ENCODE measurements at regions of chr12 and their contacts with region 1.

Region 1: GRCh38 chr12:1117970-1118563 is 127.0 kb downstream of the ERC1 start:
- ATAC-seq: peak in 7 of 8 experiments; percentile 29 to 65 (median 44)
- H3K4me3 ChIP-seq: no peak overlapping the region
- H3K27ac ChIP-seq: no peak overlapping the region
- H3K4me1 ChIP-seq: no peaks in the 10 kb centered on the region

Region 2: DNA sequence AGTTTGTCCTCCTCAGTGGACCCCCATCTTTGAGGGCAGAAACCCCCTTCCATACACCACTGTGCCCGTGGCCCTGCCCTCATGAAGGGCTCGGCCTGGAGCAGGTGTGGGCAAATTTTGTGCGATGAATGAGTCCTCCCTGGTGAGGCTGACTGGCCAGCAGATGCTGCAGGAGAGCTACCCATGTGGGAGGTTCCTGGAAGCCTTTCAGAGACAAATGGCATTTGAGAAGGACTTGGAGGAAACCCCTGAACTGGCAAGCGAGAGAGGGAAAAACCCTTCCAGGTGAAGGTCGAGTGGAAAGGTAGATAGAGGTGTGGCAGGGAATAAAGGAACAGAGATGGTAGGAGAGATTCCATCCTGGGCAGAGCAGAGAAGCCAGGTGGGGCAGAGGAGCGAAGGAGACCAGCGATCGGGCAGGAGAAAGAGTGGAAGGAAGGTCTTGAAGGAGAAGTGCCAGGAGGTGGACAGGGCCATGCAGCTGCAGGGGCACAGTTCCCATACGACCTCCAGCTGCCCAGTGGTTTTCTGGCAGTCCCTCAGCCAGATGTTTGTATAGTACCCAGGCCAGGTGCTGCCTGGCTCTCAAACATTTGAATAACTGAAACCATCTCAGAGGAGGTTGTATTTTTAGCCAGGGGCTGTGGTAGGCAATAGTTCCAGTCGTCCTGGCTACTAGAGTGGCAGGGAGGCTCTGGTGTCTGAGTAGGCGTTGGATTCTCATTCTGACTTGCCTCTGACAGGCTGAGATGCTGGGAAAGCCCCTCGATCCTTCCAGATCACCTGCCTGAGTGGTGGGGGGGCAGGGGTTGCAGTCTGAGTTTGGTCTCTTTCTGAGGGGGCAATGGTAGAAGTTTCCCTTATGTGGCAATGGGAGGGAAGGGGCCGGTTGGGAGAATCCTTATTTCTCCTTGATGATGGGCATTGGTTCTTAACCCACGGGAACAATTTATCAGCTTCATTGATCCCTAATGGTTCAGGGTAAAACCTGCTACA is 436.2 kb after region 1 on chr12:
- in situ Hi-C with region 1: loop called in 1 of 9 experiments (anchors 25 kb)
- ATAC-seq: no peak
- H3K4me3 ChIP-seq: no peak overlapping the region
- H3K27ac ChIP-seq: no peak overlapping the region
- H3K4me1 ChIP-seq: no peaks in the 10 kb centered on the region

Region 3: GRCh38 chr12:1583421-1584078 is 465.5 kb after region 1 on chr12:
- in situ Hi-C with region 1: loop called in 6 of 9 experiments (anchors 10 to 25 kb)
- ATAC-seq: peak; percentile 72 to 86 (median 82)
- H3K4me3 ChIP-seq: no peak overlapping the region
- H3K27ac ChIP-seq: no peak overlapping the region
- H3K4me1 ChIP-seq: peaks cover 38 to 40% of the 10 kb centered on the region in 2 donors

Region 4: DNA sequence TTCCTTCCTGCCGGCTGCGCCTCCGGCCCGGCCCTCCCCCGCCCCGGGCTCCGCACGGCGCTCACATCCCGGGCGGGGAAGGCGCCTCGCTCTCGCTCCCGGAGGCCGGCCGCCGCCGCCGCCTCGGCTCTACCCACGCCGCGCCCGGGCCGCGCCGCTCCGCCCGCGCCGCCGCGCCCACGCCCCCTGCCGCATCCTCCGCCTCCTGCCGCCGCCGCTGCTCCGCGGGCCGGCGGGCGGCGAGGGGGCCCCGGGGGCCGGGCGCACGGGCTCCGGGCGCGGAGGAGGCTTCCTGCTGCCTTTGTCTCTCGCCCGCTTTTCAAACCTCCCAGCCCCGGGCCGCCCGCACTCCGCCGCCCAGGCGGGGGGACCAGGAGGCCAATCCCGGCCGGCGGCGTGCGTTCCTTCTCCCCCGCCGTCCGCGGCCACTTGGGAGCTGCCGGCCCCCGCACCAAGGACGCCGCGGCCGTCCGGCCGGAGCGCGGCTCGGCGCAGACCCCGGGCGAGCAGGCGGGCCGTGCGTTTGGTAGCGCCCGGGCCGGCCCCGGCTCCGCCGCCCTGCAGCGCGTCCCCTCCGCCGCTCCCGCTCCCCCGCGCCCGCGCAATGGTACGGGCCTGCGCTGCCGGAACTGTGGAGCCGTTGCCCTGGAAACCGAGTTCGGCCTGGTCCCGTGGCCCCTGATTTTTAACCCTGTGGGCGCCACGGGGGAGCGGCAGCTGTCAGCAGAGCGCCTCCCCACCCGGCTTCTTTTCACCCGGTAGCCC is 476.4 kb after region 1 on chr12 and contains the start of gene FBXL14:
- in situ Hi-C with region 1: loop called in 7 of 9 experiments (anchors 10 to 25 kb)
- ATAC-seq: peak; percentile 69 to 79 (median 74)
- H3K4me3 ChIP-seq: peak within 1 kb of the TSS; percentile 55 to 98 (median 68)
- H3K27ac ChIP-seq: peak within 1 kb of the TSS; percentile 96 to 97
- H3K4me1 ChIP-seq: peaks cover 11 to 19% of the 10 kb centered on the region in 2 donors
- total RNA-seq, gene FBXL14: 5.6 to 25.6 (median 10.0) TPM